ENCODE measurements at regions of chr7 and their contacts with region 1.

Region 1: GRCh38 chr7:108613112-108613759 is 43.6 kb downstream of the DNAJB9 start:
- DNase-seq: peak; percentile 57 to 75 (median 74)
- ATAC-seq: peak; percentile 89
- H3K4me3 ChIP-seq: no peak overlapping the region
- H3K27ac ChIP-seq: no peak overlapping the region
- H3K4me1 ChIP-seq: no peaks in the 10 kb centered on the region
- H3K27me3 ChIP-seq: peaks cover 0 to 9% of the 10 kb centered on the region in 2 experiments; a peak in 3 of 5 replicates
- CTCF ChIP-seq: peak; percentile 44 to 92 (median 55); a peak in 5 of 6 replicates
- EP300 ChIP-seq: no peak
- POLR2A ChIP-seq: no peak
- RAD21 ChIP-seq: peak; percentile 87 to 88

Region 2: DNA sequence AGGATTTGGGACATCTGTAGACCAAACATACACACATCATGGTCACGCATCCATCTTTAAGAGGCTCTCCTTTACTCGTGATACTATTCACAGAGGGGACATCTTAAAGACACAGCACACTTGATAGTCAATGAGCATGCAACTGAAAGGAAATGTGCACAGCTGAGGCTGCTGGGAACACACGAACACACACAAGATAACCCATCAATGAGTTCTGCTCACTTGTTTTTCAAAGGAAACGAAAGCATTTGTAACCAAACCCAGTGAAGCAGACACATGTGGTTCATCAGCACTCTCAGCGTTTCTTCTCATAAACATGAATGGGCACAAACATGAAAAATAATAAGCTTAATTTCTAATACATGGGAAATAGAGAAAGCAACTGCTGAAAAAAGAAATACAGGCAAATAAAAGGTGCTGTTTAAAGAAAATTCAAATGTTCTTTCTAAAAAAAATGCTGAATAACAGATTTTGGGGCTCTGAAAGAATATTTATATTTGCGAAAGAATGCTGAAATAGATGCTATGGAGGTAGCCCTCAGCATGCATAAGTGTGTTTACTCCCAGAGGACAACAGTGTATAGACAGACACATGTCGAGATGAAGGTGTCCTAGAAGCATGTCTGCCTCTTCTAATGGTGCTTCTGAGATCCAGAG is 423.4 kb before region 1 on chr7:
- CTCF ChIA-PET with region 1: no interaction called
- POLR2A ChIA-PET with region 1: no interaction called
- in situ Hi-C with region 1: no loop called
- intact Hi-C with region 1: no loop called
- DNase-seq: no peak
- ATAC-seq: no peak
- H3K4me3 ChIP-seq: no peak overlapping the region
- H3K27ac ChIP-seq: no peak overlapping the region
- H3K4me1 ChIP-seq: peaks cover 0 to 8% of the 10 kb centered on the region in 2 experiments; a peak in 3 of 5 replicates
- H3K27me3 ChIP-seq: no peaks in the 10 kb centered on the region
- CTCF ChIP-seq: no peak
- EP300 ChIP-seq: no peak
- POLR2A ChIP-seq: no peak
- RAD21 ChIP-seq: no peak

Region 3: GRCh38 chr7:108592646-108593201 is 20.5 kb before region 1 on chr7:
- CTCF ChIA-PET with region 1: no interaction called
- POLR2A ChIA-PET with region 1: no interaction called
- in situ Hi-C with region 1: no loop called
- intact Hi-C with region 1: no loop called
- DNase-seq: peak in 2 of 4 experiments; percentile 60
- ATAC-seq: peak; percentile 92
- H3K4me3 ChIP-seq: no peak overlapping the region
- H3K27ac ChIP-seq: no peak overlapping the region
- H3K4me1 ChIP-seq: no peaks in the 10 kb centered on the region; a peak in 1 of 5 replicates
- H3K27me3 ChIP-seq: peaks cover 32% of the 10 kb centered on the region in 2 experiments
- CTCF ChIP-seq: peak; percentile 54 to 72 (median 70)
- EP300 ChIP-seq: no peak
- POLR2A ChIP-seq: no peak
- RAD21 ChIP-seq: peak; percentile 70 to 83

Region 4: DNA sequence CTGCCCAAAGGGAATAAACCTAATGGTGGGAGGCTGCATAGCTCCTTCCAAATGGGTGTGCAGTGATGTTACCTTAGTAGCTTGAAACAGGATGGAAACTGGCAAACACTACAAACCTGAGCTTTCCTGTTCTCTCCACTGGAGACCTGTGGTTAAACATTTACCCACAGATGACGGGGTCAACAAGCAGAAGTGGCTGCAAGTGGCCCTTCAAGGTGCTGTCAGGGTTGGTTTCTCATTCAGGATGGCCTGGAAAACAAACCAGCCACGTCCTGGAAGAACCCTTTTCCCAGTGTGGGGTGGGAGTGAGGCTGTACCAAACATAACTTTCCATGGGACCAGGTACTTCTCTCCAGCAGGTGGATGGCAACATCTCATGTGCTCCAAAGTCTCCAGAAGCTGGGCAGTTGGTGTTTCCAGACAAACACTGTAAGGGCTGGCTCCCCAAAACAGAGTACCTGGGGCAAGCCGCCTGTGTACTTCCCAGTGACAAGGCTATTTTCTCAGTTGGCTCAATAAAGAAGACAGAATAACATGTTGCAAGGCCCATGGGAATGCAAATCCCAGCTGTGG is 23.9 kb after region 1 on chr7:
- CTCF ChIA-PET with region 1: no interaction called
- POLR2A ChIA-PET with region 1: no interaction called
- in situ Hi-C with region 1: no loop called
- intact Hi-C with region 1: no loop called
- DNase-seq: no peak
- ATAC-seq: no peak; the same call in 2 of the 3 replicates
- H3K4me3 ChIP-seq: no peak overlapping the region
- H3K27ac ChIP-seq: no peak overlapping the region
- H3K4me1 ChIP-seq: no peaks in the 10 kb centered on the region
- H3K27me3 ChIP-seq: 0 out of 5 replicates have a peak, but pooled peaks cover 0 to 4% of the 10 kb centered on the region in 2 experiments
- CTCF ChIP-seq: no peak
- EP300 ChIP-seq: no peak
- POLR2A ChIP-seq: no peak
- RAD21 ChIP-seq: no peak

Region 5: DNA sequence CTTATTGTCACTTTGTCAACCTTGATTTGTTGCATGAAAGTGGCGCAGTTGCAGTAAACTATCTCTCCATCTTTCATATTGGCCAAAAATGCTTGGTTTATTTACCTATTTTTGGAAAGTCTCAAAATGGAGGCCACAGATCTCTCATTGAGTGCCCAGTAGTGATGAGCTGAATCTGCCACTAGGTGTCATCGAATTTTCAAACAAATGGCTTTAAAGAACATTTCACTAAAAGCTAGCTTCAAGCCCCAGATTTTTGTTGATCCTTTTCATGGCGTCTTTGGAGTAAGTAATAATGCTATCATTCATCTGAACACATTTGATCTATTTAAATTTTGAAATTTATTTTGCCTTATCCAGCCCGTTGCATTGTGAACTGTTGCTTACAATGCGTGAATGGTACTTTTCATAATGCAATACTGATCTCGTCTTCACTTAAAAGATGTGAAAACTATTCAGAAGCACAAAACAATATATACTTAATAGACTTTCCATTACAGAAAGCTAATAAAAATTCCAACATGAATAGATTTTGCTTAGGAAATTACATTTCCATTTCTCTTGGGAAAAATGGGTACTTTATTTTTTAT is 192.7 kb after region 1 on chr7:
- CTCF ChIA-PET with region 1: no interaction called
- POLR2A ChIA-PET with region 1: no interaction called
- in situ Hi-C with region 1: no loop called
- intact Hi-C with region 1: loop called (anchors 10 kb)
- DNase-seq: peak; percentile 13 to 55 (median 36)
- ATAC-seq: no peak
- H3K4me3 ChIP-seq: no peak overlapping the region
- H3K27ac ChIP-seq: no peak overlapping the region
- H3K4me1 ChIP-seq: no peaks in the 10 kb centered on the region
- H3K27me3 ChIP-seq: no peaks in the 10 kb centered on the region
- CTCF ChIP-seq: peak in 2 of 3 experiments; percentile 35 to 39; a peak in 2 of 6 replicates
- EP300 ChIP-seq: no peak
- POLR2A ChIP-seq: no peak
- RAD21 ChIP-seq: peak in 1 of 2 experiments; percentile 48; a peak in 2 of 4 replicates

Region 6: DNA sequence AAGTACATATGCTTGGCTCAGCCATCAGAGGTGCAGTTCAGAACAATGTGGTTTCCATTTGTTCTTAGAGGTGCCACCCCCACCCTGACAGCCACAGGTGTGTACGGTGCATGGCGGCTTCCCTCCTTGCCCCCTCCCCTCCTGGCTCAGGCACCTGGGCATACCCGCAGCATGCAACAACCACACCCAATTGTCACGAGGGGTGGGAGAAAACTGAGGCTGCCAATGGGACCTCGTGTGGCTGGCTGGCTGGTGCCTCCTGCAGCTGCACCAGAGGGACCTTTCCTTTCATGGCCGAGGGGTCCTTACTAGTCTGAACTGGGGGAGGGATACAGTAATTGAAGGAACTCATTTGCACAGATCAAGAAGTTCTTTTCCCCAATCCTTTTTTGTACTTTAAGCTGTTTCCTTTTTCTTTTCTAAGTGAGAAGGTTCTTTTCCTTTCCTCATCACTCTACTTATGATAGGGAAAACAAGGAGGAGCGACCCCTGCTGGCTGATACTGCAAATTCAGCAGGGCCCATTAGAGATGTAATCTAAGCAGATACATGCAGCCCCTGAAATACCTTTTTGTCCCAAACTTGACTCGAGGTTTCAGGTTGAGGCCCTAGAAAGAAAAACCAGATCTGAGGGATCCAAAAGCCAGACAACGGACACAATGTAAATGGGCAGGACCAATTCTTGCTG is 261.8 kb after region 1 on chr7:
- CTCF ChIA-PET with region 1: no interaction called
- POLR2A ChIA-PET with region 1: no interaction called
- in situ Hi-C with region 1: no loop called
- intact Hi-C with region 1: loop called (anchors 5 kb)
- DNase-seq: peak; percentile 31 to 55 (median 38)
- ATAC-seq: peak; percentile 61; the same call in 2 of the 3 replicates
- H3K4me3 ChIP-seq: no peak overlapping the region
- H3K27ac ChIP-seq: no peak overlapping the region
- H3K4me1 ChIP-seq: no peaks in the 10 kb centered on the region
- H3K27me3 ChIP-seq: no peaks in the 10 kb centered on the region
- CTCF ChIP-seq: peak in 2 of 3 experiments; percentile 42 to 54; a peak in 4 of 6 replicates
- EP300 ChIP-seq: no peak
- POLR2A ChIP-seq: no peak
- RAD21 ChIP-seq: peak in 1 of 2 experiments; percentile 29; a peak in 2 of 4 replicates

Measured in K562 (cell line).